ENCODE measurements at regions of chr18 and their contacts with region 1.

Region 1: GRCh38 chr18:26677957-26678356 is 129.6 kb upstream of the KCTD1 start:
- DNase-seq: no peak
- ATAC-seq: peak in 1 of 8 donors; percentile 64
- H3K4me3 ChIP-seq: no peak overlapping the region
- H3K27ac ChIP-seq: no peak overlapping the region
- H3K4me1 ChIP-seq: peaks cover 0 to 5% (median 0%) of the 10 kb centered on the region in 9 donors
- H3K27me3 ChIP-seq: peaks cover 0 to 3% (median 0%) of the 10 kb centered on the region in 7 donors
- CTCF ChIP-seq: no peak

Region 2: GRCh38 chr18:26621161-26622026 is 56.6 kb before region 1 on chr18:
- intact Hi-C with region 1: loop called in 1 of 10 experiments (anchors 10 kb)
- DNase-seq: peak; percentile 27 to 46
- ATAC-seq: peak in 7 of 8 donors; percentile 57 to 91 (median 70)
- H3K4me3 ChIP-seq: peak overlapping the region in 1 of 10 donors; percentile 20
- H3K27ac ChIP-seq: no peak overlapping the region
- H3K4me1 ChIP-seq: peaks cover 0 to 9% (median 0%) of the 10 kb centered on the region in 9 donors
- H3K27me3 ChIP-seq: no peaks in the 10 kb centered on the region
- CTCF ChIP-seq: peak in 8 of 9 donors; percentile 50 to 75 (median 68)

Region 3: GRCh38 chr18:26642440-26643348 is 35.3 kb before region 1 on chr18:
- intact Hi-C with region 1: no loop called
- DNase-seq: no peak
- ATAC-seq: peak in 2 of 8 donors; percentile 10 to 17
- H3K4me3 ChIP-seq: no peak overlapping the region
- H3K27ac ChIP-seq: no peak overlapping the region
- H3K4me1 ChIP-seq: peaks cover 0 to 12% (median 0%) of the 10 kb centered on the region in 9 donors
- H3K27me3 ChIP-seq: no peaks in the 10 kb centered on the region
- CTCF ChIP-seq: no peak

Region 4: DNA sequence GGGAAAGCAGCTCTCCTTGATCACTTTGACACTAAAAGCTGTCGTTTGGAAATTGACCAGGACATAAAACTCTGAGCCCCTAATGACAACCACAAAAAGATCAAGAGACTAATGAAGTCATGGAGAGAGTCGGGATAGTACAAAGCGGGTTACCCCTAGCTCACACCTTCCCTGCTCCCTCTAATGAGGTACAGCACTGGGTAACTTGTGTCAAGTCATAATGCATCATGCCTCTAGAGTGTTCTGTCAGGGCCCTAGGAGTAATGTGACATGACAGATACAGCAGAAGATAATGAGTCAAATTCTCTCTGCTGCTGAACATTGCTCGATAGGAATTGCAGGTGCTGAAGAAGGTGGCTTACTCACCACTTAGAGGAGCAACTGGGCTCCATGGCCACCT is 56.8 kb after region 1 on chr18:
- intact Hi-C with region 1: loop called in 1 of 10 experiments (anchors 10 kb)
- DNase-seq: no peak
- ATAC-seq: no peak
- H3K4me3 ChIP-seq: no peak overlapping the region
- H3K27ac ChIP-seq: no peak overlapping the region
- H3K4me1 ChIP-seq: no peaks in the 10 kb centered on the region
- H3K27me3 ChIP-seq: no peaks in the 10 kb centered on the region
- CTCF ChIP-seq: no peak

Region 5: GRCh38 chr18:26863122-26863879 is 185.3 kb after region 1 on chr18:
- intact Hi-C with region 1: no loop called
- DNase-seq: peak; percentile 61 to 81
- ATAC-seq: peak; percentile 78 to 98 (median 93)
- H3K4me3 ChIP-seq: peak overlapping the region in 9 of 10 donors; percentile 32 to 53 (median 48)
- H3K27ac ChIP-seq: peak overlapping the region in 7 of 10 donors; percentile 34 to 76 (median 65)
- H3K4me1 ChIP-seq: peaks cover 0 to 23% (median 6%) of the 10 kb centered on the region in 9 donors
- H3K27me3 ChIP-seq: peaks cover 0 to 24% (median 4%) of the 10 kb centered on the region in 7 donors
- CTCF ChIP-seq: no peak